Motor neuron (in vitro differentiated cells): ENCODE measurements at regions of chr12 and their contacts with region 1.

Region 1: DNA sequence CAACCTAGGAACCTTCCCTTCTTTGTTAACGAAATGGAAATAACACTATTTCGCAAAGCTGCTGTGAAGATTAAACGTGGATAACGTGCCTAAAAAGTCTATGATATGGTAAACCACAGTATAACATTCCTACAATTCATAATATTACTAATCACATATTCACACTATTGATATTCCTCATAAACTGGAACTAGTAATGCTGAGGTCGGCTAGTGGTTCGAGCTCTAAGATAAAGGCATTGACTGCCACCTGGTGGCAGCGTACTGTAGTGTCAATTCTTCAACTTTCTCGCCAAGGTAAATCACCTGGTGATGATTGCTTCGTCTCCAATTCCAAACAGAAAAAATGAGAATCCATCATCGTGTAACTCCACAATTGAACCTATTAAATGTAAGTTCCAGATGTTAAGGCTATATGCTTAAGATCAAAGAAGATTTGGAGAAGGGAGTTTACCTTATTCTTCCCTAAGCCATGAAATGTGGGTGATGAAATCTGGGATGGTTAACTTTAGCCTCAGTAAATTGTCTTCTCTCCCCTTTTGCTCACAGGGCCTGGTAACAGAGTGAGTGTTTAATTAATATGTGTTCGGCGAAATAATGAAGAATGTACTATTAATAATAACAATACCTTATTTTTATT is 197.5 kb upstream of the TMEM132C start:
- ATAC-seq: peak in 3 of 8 experiments; percentile 55 to 92 (median 62)
- H3K4me3 ChIP-seq: no peak overlapping the region
- H3K27ac ChIP-seq: no peak overlapping the region
- H3K4me1 ChIP-seq: no peaks in the 10 kb centered on the region

Region 2: GRCh38 chr12:127677537-127678131 is 391.8 kb before region 1 on chr12:
- in situ Hi-C with region 1: loop called in 1 of 9 experiments (anchors 25 kb)
- ATAC-seq: peak; percentile 47 to 99 (median 84)
- H3K4me3 ChIP-seq: no peak overlapping the region
- H3K27ac ChIP-seq: no peak overlapping the region
- H3K4me1 ChIP-seq: no peaks in the 10 kb centered on the region

Region 3: DNA sequence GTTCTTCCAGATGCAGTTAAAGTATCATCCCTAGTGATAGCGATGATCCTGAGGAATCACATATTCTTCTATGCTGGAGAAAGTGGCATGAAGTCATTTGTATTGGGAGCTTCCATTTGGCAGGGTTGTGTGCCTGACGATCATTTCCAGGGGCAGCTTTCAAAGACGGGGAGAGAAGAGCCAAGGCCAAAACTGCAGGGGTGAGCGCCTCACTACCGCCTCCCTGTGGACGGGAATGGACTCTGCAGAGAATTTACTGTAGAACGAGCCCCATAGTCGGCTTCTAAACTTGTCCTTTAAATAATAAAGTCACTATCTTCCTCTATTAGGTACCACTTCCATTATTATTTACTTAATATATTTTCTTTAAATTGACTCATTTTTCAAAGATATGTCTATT is 358.4 kb before region 1 on chr12:
- in situ Hi-C with region 1: loop called in 1 of 9 experiments (anchors 25 kb)
- ATAC-seq: no peak
- H3K4me3 ChIP-seq: no peak overlapping the region
- H3K27ac ChIP-seq: no peak overlapping the region
- H3K4me1 ChIP-seq: no peaks in the 10 kb centered on the region

Region 4: GRCh38 chr12:127809275-127809674 is 260.2 kb before region 1 on chr12:
- in situ Hi-C with region 1: loop called in 1 of 9 experiments (anchors 25 kb)
- ATAC-seq: peak; percentile 10 to 79 (median 57)
- H3K4me3 ChIP-seq: no peak overlapping the region
- H3K27ac ChIP-seq: no peak overlapping the region
- H3K4me1 ChIP-seq: peaks cover 0 to 10% of the 10 kb centered on the region in 2 donors

Region 5: DNA sequence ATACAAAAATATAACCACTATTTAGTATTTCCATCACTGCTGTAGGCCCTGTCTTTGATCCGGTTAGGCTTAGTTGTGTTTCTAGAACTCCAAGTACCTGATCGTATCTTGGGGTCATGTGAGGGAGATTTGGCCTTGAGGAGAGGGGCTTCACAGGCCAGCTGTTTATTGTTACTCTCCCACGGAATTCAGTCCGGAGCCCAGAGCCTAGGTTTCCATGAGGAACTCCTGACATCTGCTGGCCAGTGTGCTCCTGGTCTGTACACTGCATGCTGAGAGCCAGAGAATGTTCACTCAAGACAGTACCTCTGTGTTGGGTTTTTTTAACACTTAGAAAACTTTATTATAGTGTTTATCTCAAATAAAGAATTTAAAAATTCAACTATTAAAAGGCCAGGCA is 143.5 kb before region 1 on chr12:
- in situ Hi-C with region 1: loop called in 2 of 9 experiments (anchors 10 to 25 kb)
- ATAC-seq: peak in 6 of 8 experiments; percentile 73 to 97 (median 80)
- H3K4me3 ChIP-seq: no peak overlapping the region
- H3K27ac ChIP-seq: no peak overlapping the region
- H3K4me1 ChIP-seq: no peaks in the 10 kb centered on the region

Region 6: GRCh38 chr12:128339126-128339520 is 269.6 kb after region 1 on chr12:
- in situ Hi-C with region 1: no loop called
- ATAC-seq: peak in 2 of 8 experiments; percentile 31 to 83
- H3K4me3 ChIP-seq: no peak overlapping the region
- H3K27ac ChIP-seq: no peak overlapping the region
- H3K4me1 ChIP-seq: peaks cover 0 to 2% of the 10 kb centered on the region in 2 donors